Activated CD4-positive, alpha-beta T cell treated with anti-CD3 and anti-CD28 coated beads for 36 hours (primary cell): ENCODE measurements at regions of chr7 and their contacts with region 1.

Region 1: GRCh38 chr7:102412548-102412947 is 16.4 kb downstream of the PRKRIP1 start:
- DNase-seq: peak; percentile 57
- ATAC-seq: no peak
- H3K4me3 Mint-ChIP-seq: no peak overlapping the region
- H3K27ac Mint-ChIP-seq: no peak overlapping the region
- H3K4me1 Mint-ChIP-seq: peaks cover 33% of the 10 kb centered on the region
- H3K27me3 Mint-ChIP-seq: no peaks in the 10 kb centered on the region

Region 2: GRCh38 chr7:101717628-101718357 is 694.8 kb before region 1 on chr7:
- CTCF ChIA-PET with region 1: no interaction called
- POLR2A ChIA-PET with region 1: no interaction called
- intact Hi-C with region 1: no loop called
- DNase-seq: no peak
- ATAC-seq: no peak
- H3K4me3 Mint-ChIP-seq: no peak overlapping the region
- H3K27ac Mint-ChIP-seq: no peak overlapping the region
- H3K4me1 Mint-ChIP-seq: no peaks in the 10 kb centered on the region
- H3K27me3 Mint-ChIP-seq: no peaks in the 10 kb centered on the region

Region 3: GRCh38 chr7:102093287-102094001 is 319.1 kb before region 1 on chr7:
- CTCF ChIA-PET with region 1: no interaction called
- POLR2A ChIA-PET with region 1: no interaction called
- intact Hi-C with region 1: no loop called
- DNase-seq: no peak
- ATAC-seq: no peak
- H3K4me3 Mint-ChIP-seq: no peak overlapping the region
- H3K27ac Mint-ChIP-seq: no peak overlapping the region
- H3K4me1 Mint-ChIP-seq: no peaks in the 10 kb centered on the region
- H3K27me3 Mint-ChIP-seq: no peaks in the 10 kb centered on the region

Region 4: DNA sequence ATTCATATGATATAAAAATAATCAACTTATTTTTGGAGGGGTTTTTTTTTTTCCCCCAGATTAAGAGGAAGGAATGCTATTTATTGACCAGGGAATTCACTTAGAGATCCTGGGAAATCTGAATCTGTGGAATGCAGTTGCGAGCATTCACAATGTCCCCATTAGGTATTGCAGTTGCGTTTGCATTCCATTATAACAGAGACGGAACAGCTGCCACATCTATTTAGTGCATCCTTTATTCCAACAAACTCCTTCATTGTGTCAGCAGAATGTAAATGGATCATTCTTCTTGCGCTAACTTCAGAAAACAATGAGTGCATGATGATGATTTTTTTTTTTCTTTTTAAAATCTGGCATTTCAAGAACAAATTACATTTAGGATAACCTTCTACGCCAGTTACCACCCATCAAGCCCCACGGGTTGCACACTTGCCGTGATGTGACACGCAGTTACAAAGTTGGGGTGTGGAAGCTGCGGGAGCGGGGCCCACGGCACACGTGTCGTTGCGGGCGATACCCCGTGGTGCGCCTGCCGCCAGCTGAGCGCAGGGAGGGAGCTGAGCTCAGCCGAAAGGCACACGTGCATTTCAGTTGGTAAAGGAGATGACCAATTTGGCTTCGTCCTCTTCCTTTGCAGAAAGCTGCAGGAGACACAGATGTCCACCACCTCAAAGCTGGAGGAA is 301.3 kb before region 1 on chr7:
- CTCF ChIA-PET with region 1: no interaction called
- POLR2A ChIA-PET with region 1: no interaction called
- intact Hi-C with region 1: no loop called
- DNase-seq: no peak
- ATAC-seq: no peak
- H3K4me3 Mint-ChIP-seq: no peak overlapping the region
- H3K27ac Mint-ChIP-seq: no peak overlapping the region
- H3K4me1 Mint-ChIP-seq: no peaks in the 10 kb centered on the region
- H3K27me3 Mint-ChIP-seq: no peaks in the 10 kb centered on the region

Region 5: DNA sequence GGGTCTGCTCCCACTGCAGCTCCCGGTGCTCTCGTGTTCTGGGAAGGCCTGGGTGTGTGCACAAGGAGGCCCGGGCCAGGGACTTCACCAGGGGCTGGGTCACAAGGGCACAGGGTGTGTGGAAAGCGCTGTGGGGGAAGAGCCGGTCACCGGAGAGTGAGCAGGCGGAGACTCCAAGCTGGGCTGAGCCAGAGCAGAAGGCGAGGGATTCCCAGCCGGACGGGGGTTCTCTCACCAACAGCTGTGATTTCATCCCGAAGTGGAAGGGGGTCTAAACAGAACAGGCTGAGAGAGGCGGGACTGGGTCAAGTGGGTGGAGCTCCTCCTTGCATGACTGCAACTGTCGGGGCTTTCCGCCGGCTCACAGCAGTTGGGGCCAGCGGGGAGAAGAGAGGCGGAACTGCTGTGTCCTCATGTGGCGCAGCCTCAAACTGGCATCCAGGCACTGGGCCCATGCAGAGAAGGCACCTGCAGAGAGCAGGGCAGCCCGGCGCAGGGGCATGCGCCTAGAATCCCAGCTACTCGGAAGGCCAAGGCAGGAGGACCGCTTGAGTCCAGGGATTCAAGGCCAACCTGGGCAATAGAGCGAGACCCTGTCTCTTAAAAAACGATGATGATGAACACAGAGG is 13.2 kb after region 1 on chr7:
- CTCF ChIA-PET with region 1: interaction called, 13 read pairs
- POLR2A ChIA-PET with region 1: interaction called, 5 read pairs
- intact Hi-C with region 1: loop called in 1 of 2 experiments (anchors 1 kb)
- DNase-seq: peak; percentile 91
- ATAC-seq: peak; percentile 82
- H3K4me3 Mint-ChIP-seq: peak overlapping the region; percentile 72
- H3K27ac Mint-ChIP-seq: peak overlapping the region; percentile 100
- H3K4me1 Mint-ChIP-seq: peaks cover 60% of the 10 kb centered on the region
- H3K27me3 Mint-ChIP-seq: no peaks in the 10 kb centered on the region

Region 6: GRCh38 chr7:102433219-102434038 is 20.9 kb after region 1 on chr7 and contains the start of gene ORAI2:
- CTCF ChIA-PET with region 1: interaction called, 3 read pairs
- POLR2A ChIA-PET with region 1: interaction called, 3 read pairs
- intact Hi-C with region 1: loop called in 1 of 2 experiments (anchors 2 kb)
- DNase-seq: peak; percentile 92
- ATAC-seq: peak; percentile 63
- H3K4me3 Mint-ChIP-seq: peak within 1 kb of the TSS; percentile 78
- H3K27ac Mint-ChIP-seq: peak within 1 kb of the TSS; percentile 69
- H3K4me1 Mint-ChIP-seq: peaks cover 41% of the 10 kb centered on the region
- H3K27me3 Mint-ChIP-seq: no peaks in the 10 kb centered on the region
- total RNA-seq, gene ORAI2: 20.8 to 25.1 TPM

Region 7: GRCh38 chr7:103150192-103150591 is 737.6 kb after region 1 on chr7:
- CTCF ChIA-PET with region 1: no interaction called
- POLR2A ChIA-PET with region 1: no interaction called
- intact Hi-C with region 1: no loop called
- DNase-seq: peak; percentile 54
- ATAC-seq: peak; percentile 73
- H3K4me3 Mint-ChIP-seq: peak overlapping the region; percentile 28
- H3K27ac Mint-ChIP-seq: peak overlapping the region; percentile 92
- H3K4me1 Mint-ChIP-seq: peaks cover 32% of the 10 kb centered on the region
- H3K27me3 Mint-ChIP-seq: peaks cover 1% of the 10 kb centered on the region